ENCODE measurements at regions of chr11 and their contacts with region 1.

Region 1: GRCh38 chr11:93054881-93055280 is 85.4 kb downstream of the MTNR1B start:
- DNase-seq: no peak
- H3K4me3 Mint-ChIP-seq: peak overlapping the region; percentile 5
- H3K27ac Mint-ChIP-seq: peak overlapping the region; percentile 73
- H3K4me1 Mint-ChIP-seq: peaks cover 7% of the 10 kb centered on the region
- H3K27me3 Mint-ChIP-seq: peaks cover 2% of the 10 kb centered on the region

Region 2: DNA sequence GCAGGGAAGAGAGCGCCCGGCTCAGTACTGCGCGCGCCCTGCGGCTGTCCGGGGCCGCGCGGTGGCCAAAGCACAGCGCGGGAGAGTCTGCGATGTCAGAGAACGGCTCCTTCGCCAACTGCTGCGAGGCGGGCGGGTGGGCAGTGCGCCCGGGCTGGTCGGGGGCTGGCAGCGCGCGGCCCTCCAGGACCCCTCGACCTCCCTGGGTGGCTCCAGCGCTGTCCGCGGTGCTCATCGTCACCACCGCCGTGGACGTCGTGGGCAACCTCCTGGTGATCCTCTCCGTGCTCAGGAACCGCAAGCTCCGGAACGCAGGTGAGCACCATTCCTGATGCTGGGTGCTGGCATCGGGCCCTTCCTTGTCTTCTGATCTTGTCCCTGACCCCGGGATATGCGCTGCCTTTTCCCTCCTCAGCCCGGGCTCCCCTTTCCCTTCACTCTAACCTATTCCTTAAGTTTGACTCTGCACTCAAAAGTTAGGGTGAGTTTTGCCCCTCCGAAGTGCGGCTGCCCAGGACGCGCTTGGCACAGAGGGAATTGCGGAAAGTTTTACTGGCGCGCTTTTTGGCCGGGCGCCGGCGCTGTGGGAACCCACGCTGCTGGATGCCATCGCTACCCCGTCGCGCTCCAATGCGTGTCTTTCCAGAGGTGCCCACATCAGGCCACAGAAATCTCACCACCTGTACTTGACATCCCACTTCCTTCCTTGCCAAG is 85.1 kb before region 1 on chr11 and contains the start of gene MTNR1B:
- intact Hi-C with region 1: loop called (anchors 10 kb)
- DNase-seq: no peak
- H3K4me3 Mint-ChIP-seq: no peak within 1 kb of the TSS
- H3K27ac Mint-ChIP-seq: no peak within 1 kb of the TSS
- H3K4me1 Mint-ChIP-seq: peaks cover 4% of the 10 kb centered on the region
- H3K27me3 Mint-ChIP-seq: peaks cover 8% of the 10 kb centered on the region
- total RNA-seq, gene MTNR1B: not detected in 2 replicates

Region 3: DNA sequence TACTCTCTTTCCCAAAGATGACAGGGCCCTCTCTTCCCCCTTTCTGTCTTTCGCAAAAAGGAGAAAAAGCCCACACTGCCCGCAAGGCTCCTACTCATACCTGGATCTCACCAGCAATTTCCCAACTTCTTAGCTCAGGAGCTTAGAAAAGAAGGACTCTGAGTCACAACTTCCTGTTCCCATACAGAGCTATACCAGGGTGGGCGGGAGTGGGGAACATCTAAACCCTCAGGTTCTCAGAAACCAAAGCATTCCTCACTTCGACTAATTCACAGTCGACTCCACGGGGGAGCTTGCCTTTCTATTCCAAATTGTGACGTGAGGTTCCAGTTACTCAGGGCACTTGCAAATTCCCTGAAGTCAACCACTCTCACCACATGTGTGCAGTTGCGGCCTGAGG is 23.5 kb before region 1 on chr11:
- intact Hi-C with region 1: loop called (anchors 1 kb)
- DNase-seq: no peak
- H3K4me3 Mint-ChIP-seq: peak overlapping the region; percentile 23
- H3K27ac Mint-ChIP-seq: peak overlapping the region; percentile 17
- H3K4me1 Mint-ChIP-seq: peaks cover 4% of the 10 kb centered on the region
- H3K27me3 Mint-ChIP-seq: no peaks in the 10 kb centered on the region

Region 4: GRCh38 chr11:93219440-93219839 is 164.6 kb after region 1 on chr11:
- intact Hi-C with region 1: no loop called
- DNase-seq: no peak
- H3K4me3 Mint-ChIP-seq: no peak overlapping the region
- H3K27ac Mint-ChIP-seq: no peak overlapping the region
- H3K4me1 Mint-ChIP-seq: no peaks in the 10 kb centered on the region
- H3K27me3 Mint-ChIP-seq: peaks cover 22% of the 10 kb centered on the region